Activated naive CD4-positive, alpha-beta T cell treated with anti-CD3 and anti-CD28 coated beads for 36 hours (primary cell): ENCODE measurements at regions of chr1 and their contacts with region 1.

Region 1: DNA sequence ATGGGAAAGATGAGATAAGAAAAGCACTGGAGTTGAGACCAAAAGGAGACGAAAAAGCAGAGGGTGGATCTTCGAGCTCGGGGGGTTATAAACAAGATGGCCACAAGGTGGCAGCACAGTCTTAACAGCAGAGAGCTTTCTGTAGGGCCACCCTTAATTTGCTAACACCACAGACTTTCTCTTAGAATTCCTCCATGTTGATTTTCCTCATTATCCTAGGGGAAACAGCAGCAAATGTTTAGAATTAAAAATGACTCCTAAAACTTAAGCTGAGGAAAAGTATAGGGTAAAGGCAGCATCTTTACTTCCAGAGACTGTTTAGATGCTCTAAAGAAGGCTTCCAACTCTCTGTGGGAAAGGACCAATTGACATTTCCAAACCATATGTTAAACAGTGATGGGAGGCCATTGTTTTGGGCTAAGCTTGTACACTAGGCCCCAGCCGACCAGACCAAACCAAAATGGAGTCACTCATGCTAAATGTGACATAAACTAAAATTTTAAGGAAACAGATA is 2.5 kb upstream of the APOBEC4 start:
- DNase-seq: peak; percentile 87
- H3K4me3 Mint-ChIP-seq: peak overlapping the region; percentile 13
- H3K27ac Mint-ChIP-seq: no peak overlapping the region
- H3K4me1 Mint-ChIP-seq: peaks cover 40% of the 10 kb centered on the region
- H3K27me3 Mint-ChIP-seq: no peaks in the 10 kb centered on the region

Region 2: DNA sequence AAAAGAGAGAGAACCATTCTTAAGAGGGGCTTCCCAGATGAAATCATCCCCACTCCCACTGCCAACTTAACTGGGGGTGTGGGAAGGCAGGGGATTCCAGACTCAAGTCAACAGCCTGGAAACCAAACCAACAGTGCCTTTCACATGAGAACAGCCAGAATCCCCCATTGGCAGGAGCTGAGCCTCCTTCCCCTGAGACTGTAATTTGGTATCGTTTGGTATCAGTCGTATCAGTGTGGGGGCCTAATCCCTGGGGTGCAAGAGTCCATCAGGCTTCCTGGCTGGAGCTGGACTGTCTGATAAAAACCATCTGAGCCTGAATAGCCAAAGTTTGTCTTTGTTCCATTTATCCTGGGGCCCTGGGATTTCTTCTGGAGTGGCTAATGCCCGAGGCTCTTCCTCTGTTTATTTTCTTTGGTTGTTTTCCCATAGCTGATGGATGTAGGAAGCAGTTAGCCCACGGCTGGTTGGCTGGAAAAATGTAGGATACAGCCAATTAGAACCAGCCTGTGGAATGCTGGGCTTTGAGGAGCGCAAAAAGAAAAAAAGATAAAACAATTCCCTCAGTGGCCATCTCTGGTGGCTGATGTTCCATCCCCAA is 385.0 kb before region 1 on chr1:
- CTCF ChIA-PET with region 1: no interaction called
- intact Hi-C with region 1: no loop called
- DNase-seq: no peak
- H3K4me3 Mint-ChIP-seq: no peak overlapping the region
- H3K27ac Mint-ChIP-seq: no peak overlapping the region
- H3K4me1 Mint-ChIP-seq: no peaks in the 10 kb centered on the region
- H3K27me3 Mint-ChIP-seq: peaks cover 3% of the 10 kb centered on the region

Region 3: GRCh38 chr1:183670178-183670577 is 14.6 kb after region 1 on chr1:
- CTCF ChIA-PET with region 1: interaction called, 15 read pairs
- intact Hi-C with region 1: no loop called
- DNase-seq: no peak
- H3K4me3 Mint-ChIP-seq: no peak overlapping the region
- H3K27ac Mint-ChIP-seq: no peak overlapping the region
- H3K4me1 Mint-ChIP-seq: no peaks in the 10 kb centered on the region
- H3K27me3 Mint-ChIP-seq: no peaks in the 10 kb centered on the region

Region 4: GRCh38 chr1:183915625-183916510 is 260.2 kb after region 1 on chr1:
- CTCF ChIA-PET with region 1: interaction called, 130 read pairs
- intact Hi-C with region 1: loop called (anchors 1 kb)
- DNase-seq: peak; percentile 86
- H3K4me3 Mint-ChIP-seq: no peak overlapping the region
- H3K27ac Mint-ChIP-seq: peak overlapping the region; percentile 6
- H3K4me1 Mint-ChIP-seq: peaks cover 20% of the 10 kb centered on the region
- H3K27me3 Mint-ChIP-seq: no peaks in the 10 kb centered on the region

Region 5: DNA sequence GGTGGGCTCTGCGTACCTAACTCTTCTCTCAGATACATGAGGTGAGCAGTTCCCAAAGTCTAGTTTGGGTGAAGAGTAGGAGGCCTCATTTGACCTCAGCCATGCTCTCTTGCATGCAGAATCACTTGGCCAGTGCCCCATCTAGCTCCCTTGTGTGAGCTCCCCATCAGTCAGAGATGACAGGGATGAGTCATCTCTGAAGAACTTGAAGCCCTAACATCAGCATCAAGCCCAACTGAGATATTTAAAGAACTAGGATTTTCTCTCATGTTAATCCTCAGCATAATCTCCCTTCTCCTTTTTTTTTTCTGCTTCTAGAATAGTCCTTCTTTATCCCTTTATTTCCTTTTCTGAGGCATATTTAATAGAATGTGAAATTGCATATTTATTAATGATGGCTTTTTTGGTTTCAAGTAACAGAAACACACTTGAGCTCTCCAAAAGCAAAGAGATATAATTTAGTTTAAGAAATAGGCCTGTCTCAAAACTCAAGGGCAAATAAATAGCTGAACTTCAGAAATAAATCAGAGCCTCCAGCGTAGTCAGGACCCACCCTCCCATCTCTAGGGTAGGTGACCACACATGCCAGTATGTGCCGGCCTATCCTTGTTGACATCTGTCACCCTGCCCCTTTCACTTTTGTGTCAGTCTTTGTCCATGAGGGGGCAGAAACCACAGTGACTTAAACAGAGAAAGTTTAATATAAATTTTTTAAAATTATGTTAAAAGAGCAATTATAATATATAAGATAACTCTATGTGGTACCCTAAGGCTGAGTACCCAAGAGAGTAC is 508.3 kb after region 1 on chr1:
- CTCF ChIA-PET with region 1: no interaction called
- intact Hi-C with region 1: loop called (anchors 2 kb)
- DNase-seq: no peak
- H3K4me3 Mint-ChIP-seq: no peak overlapping the region
- H3K27ac Mint-ChIP-seq: no peak overlapping the region
- H3K4me1 Mint-ChIP-seq: no peaks in the 10 kb centered on the region
- H3K27me3 Mint-ChIP-seq: peaks cover 1% of the 10 kb centered on the region

Region 6: GRCh38 chr1:184754476-184755225 is 1099.0 kb after region 1 on chr1 and contains the start of gene EDEM3:
- CTCF ChIA-PET with region 1: no interaction called
- intact Hi-C with region 1: loop called (anchors 1 kb)
- DNase-seq: peak; percentile 98
- H3K4me3 Mint-ChIP-seq: peak within 1 kb of the TSS; percentile 88
- H3K27ac Mint-ChIP-seq: peak within 1 kb of the TSS; percentile 88
- H3K4me1 Mint-ChIP-seq: peaks cover 36% of the 10 kb centered on the region
- H3K27me3 Mint-ChIP-seq: no peaks in the 10 kb centered on the region
- total RNA-seq, gene EDEM3: 9.9 to 10.5 TPM